ENCODE measurements at regions of chr5 and their contacts with region 1.

Region 1: DNA sequence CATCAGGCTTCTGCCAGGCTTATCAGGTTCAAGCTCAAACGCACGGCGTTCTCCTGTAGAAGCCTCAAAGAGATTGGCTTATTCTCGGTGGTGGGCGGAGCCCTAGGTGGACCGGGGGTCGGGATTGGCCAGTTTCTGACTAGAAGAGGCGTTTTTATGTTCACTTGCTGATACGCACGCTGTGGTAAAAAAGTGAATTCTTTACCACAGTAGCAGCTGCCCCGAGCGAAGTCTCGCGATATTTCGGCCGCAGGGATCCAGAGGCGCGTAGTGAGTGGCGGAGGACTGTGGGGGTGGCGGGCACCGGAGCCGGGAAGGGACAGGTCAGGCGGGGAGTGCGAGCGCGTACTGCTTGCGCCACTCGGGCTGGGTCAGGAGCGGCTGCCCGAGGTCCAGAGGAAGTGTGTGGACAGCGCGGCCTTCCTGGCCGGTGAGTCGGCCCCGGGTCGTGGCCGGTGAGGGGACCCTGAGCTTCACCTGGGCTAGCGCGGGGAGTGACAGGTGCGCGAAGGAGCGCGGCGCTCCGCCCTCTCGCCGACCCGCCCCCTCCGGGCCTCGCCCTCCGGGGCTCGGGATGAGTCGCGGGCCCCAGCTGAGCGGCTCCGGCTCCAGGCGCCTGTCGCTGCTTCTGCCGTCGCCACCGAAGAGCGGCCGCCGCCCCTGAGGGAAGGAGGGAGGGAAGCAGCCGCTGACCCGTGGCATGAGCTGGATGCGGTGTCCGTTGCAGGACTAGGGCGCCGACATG is at the start of gene DMXL1:
- DNase-seq: peak; percentile 100
- H3K4me3 ChIP-seq: peak within 1 kb of the TSS; percentile 83 to 95 (median 88)
- H3K27ac ChIP-seq: peak within 1 kb of the TSS; percentile 94 to 99 (median 97)
- H3K4me1 ChIP-seq: peaks cover 0 to 40% (median 21%) of the 10 kb centered on the region in 4 donors
- H3K27me3 ChIP-seq: no peaks in the 10 kb centered on the region
- CTCF ChIP-seq: no peak
- EP300 ChIP-seq: peak in 1 of 4 donors; percentile 47
- POLR2A ChIP-seq: peak; percentile 57 to 79
- total RNA-seq, gene DMXL1: 50.8 to 106 (median 66.9) TPM

Region 2: GRCh38 chr5:118987988-118988865 is 82.8 kb before region 1 on chr5 and contains the start of gene DTWD2:
- intact Hi-C with region 1: loop called (anchors 2 kb)
- DNase-seq: peak; percentile 93
- H3K4me3 ChIP-seq: peak within 1 kb of the TSS; percentile 59 to 76 (median 66)
- H3K27ac ChIP-seq: peak within 1 kb of the TSS; percentile 86 to 95 (median 90)
- H3K4me1 ChIP-seq: peaks cover 0 to 16% (median 12%) of the 10 kb centered on the region in 4 donors
- H3K27me3 ChIP-seq: no peaks in the 10 kb centered on the region
- CTCF ChIP-seq: peak; percentile 74 to 94 (median 80)
- EP300 ChIP-seq: no peak
- POLR2A ChIP-seq: no peak
- total RNA-seq, gene DTWD2: 4.6 to 10.4 (median 7.9) TPM

Region 3: GRCh38 chr5:119267958-119268386 is 197.0 kb after region 1 on chr5:
- intact Hi-C with region 1: loop called (anchors 1 kb)
- DNase-seq: peak; percentile 97
- H3K4me3 ChIP-seq: peak overlapping the region; percentile 50 to 84 (median 78)
- H3K27ac ChIP-seq: peak overlapping the region; percentile 89 to 96 (median 92)
- H3K4me1 ChIP-seq: peaks cover 0 to 28% (median 15%) of the 10 kb centered on the region in 4 donors
- H3K27me3 ChIP-seq: no peaks in the 10 kb centered on the region
- CTCF ChIP-seq: peak in 3 of 4 experiments; percentile 15 to 31 (median 29)
- EP300 ChIP-seq: no peak
- POLR2A ChIP-seq: no peak

Region 4: GRCh38 chr5:119332978-119333401 is 262.0 kb after region 1 on chr5:
- intact Hi-C with region 1: loop called (anchors 10 kb)
- DNase-seq: no peak
- H3K4me3 ChIP-seq: no peak overlapping the region
- H3K27ac ChIP-seq: no peak overlapping the region
- H3K4me1 ChIP-seq: peaks cover 0 to 56% (median 44%) of the 10 kb centered on the region in 4 donors
- H3K27me3 ChIP-seq: no peaks in the 10 kb centered on the region
- CTCF ChIP-seq: no peak
- EP300 ChIP-seq: no peak
- POLR2A ChIP-seq: no peak

Region 5: GRCh38 chr5:119452373-119453039 is 381.5 kb after region 1 on chr5 and contains the start of gene HSD17B4:
- intact Hi-C with region 1: loop called (anchors 10 kb)
- DNase-seq: peak; percentile 95
- H3K4me3 ChIP-seq: peak within 1 kb of the TSS; percentile 62 to 80 (median 64)
- H3K27ac ChIP-seq: peak within 1 kb of the TSS; percentile 80 to 88 (median 86)
- H3K4me1 ChIP-seq: peaks cover 0 to 14% (median 11%) of the 10 kb centered on the region in 4 donors
- H3K27me3 ChIP-seq: no peaks in the 10 kb centered on the region
- CTCF ChIP-seq: no peak
- EP300 ChIP-seq: no peak
- POLR2A ChIP-seq: peak; percentile 54 to 71
- total RNA-seq, gene HSD17B4: 80.6 to 114 (median 86.5) TPM